Dorsolateral prefrontal cortex (tissue), 120 donors: ENCODE measurements at regions of chr6 and their contacts with region 1.

Region 1: DNA sequence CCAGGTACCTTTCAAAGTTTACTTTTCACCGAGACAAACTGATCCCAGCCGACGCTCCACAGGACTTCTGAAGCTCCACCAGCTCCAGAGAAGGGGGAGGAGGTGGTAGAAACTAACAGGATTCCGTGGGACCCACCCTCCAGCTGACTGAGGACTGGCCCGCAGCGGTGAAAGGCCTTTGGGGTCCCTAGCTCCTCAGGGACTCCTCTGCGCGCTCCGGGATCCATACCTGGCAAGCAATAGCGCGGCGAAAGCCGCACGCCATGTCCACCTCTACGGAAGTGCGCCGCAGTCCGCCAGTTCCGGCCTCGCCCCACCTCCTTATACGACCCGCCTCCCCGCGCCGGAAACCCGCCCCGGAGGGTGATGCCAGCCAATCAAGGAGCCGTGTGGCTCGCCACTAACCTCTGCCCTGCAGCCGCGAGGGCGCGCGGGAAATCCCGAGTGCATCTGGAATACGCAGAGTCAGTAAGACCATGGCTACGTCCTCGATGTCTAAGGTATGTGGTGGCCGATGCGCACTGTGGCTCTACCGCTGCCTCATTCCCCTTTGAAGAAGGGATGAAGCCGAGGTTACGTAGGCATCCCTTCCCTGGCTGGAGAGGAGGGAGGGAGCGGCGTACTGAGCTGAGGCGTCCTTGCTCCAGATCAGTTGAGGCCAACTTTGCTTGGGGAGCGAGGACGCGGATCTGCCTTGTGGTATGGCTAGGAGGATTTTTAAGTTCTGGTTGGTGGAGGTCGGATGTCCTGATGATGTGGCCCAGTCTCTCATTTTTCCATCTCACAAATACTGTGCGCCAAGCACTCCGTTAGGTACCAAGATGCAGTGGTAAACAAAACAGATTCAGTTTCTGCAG is at the starts of genes ORC3 and RARS2:
- DNase-seq: peak; percentile 96 to 98 (median 97)
- H3K4me3 ChIP-seq: peak within 1 kb of the TSS; percentile 59 to 99 (median 91)
- H3K27ac ChIP-seq: peak within 1 kb of the TSS in 37 of 59 donors; percentile 2 to 89 (median 55)
- H3K27me3 ChIP-seq: no peaks in the 10 kb centered on the region
- CTCF ChIP-seq: peak in 40 of 56 donors; percentile 6 to 61 (median 32)
- total RNA-seq, gene ORC3: 21.8 to 47.2 (median 37.7) TPM
- total RNA-seq, gene RARS2: 14.0 to 30.7 (median 21.6) TPM

Region 2: DNA sequence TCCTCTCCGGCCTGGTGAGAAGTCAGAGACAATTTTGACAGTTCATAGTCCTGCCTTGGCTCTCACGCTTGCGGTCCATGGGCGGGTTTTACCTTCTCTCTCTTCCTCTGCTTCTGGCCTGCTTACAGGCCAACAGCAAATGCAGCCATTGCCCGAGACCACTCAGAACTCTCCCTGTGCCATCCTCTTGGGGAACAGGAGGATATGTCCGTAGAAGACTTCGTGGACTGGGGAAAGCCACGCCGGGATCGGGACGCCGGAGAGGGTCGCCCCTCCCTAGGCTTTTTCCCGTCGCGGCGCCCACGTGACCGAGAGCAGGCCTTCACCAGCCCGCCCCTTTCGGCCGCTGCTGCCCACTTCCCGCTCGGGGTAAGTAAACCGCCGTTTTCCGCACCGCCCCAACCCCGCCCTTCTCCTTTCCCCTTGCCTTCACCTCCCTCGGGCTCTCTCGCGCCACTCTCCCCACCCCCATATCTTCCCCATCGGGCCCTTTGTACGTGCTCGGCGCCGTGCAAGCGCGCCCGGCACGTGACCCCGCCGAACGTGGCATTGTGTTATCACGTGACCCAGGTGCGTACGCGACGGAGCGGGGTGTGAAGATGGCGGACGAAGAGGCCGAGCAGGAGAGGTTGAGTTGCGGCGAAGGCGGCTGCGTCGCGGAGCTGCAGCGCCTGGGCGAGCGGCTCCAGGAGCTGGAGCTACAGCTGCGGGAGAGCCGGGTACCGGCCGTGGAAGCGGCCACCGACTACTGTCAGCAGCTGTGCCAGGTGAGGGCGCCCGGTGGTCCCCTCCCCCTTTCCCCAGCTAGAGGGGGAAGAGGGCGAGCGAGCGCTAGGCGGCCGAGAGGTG is 434.7 kb before region 1 on chr6 and contains the start of gene ZNF292:
- intact Hi-C with region 1: loop called in 1 of 2 experiments (anchors 5 kb)
- DNase-seq: peak; percentile 91 to 95 (median 94)
- H3K4me3 ChIP-seq: peak within 1 kb of the TSS; percentile 75 to 100 (median 96)
- H3K27ac ChIP-seq: peak within 1 kb of the TSS; percentile 84 to 100 (median 98)
- H3K27me3 ChIP-seq: no peaks in the 10 kb centered on the region
- CTCF ChIP-seq: peak in 28 of 56 donors; percentile 6 to 53 (median 31)
- total RNA-seq, gene ZNF292: 60.4 to 119 (median 85.4) TPM

Region 3: GRCh38 chr6:87407901-87408720 is 181.8 kb before region 1 on chr6 and contains the start of gene CFAP206:
- intact Hi-C with region 1: loop called in 1 of 2 experiments (anchors 10 kb)
- DNase-seq: peak; percentile 51 to 84 (median 74)
- H3K4me3 ChIP-seq: peak within 1 kb of the TSS; percentile 64 to 98 (median 92)
- H3K27ac ChIP-seq: peak within 1 kb of the TSS; percentile 24 to 95 (median 85)
- H3K27me3 ChIP-seq: no peaks in the 10 kb centered on the region
- CTCF ChIP-seq: peak in 23 of 56 donors; percentile 6 to 45 (median 26)
- total RNA-seq, gene CFAP206: 0.82 to 5.3 (median 3.2) TPM

Region 4: GRCh38 chr6:87472525-87473418 is 117.1 kb before region 1 on chr6 and contains the start of gene SLC35A1:
- intact Hi-C with region 1: loop called (anchors 5 to 10 kb)
- DNase-seq: peak; percentile 76 to 93 (median 86)
- H3K4me3 ChIP-seq: peak within 1 kb of the TSS; percentile 58 to 99 (median 89)
- H3K27ac ChIP-seq: peak within 1 kb of the TSS; percentile 65 to 99 (median 93)
- H3K27me3 ChIP-seq: no peaks in the 10 kb centered on the region
- CTCF ChIP-seq: peak in 49 of 56 donors; percentile 6 to 69 (median 44)
- total RNA-seq, gene SLC35A1: 9.8 to 34.1 (median 22.8) TPM

Region 5: GRCh38 chr6:87701676-87702588 is 112.0 kb after region 1 on chr6 and contains the start of gene AKIRIN2:
- intact Hi-C with region 1: loop called (anchors 5 to 10 kb)
- DNase-seq: peak; percentile 93 to 97 (median 96)
- H3K4me3 ChIP-seq: peak within 1 kb of the TSS; percentile 61 to 98 (median 93)
- H3K27ac ChIP-seq: peak within 1 kb of the TSS; percentile 79 to 100 (median 98)
- H3K27me3 ChIP-seq: no peaks in the 10 kb centered on the region
- CTCF ChIP-seq: peak in 9 of 56 donors; percentile 3 to 41 (median 13)
- total RNA-seq, gene AKIRIN2: 38.8 to 78.6 (median 58.0) TPM

Region 6: DNA sequence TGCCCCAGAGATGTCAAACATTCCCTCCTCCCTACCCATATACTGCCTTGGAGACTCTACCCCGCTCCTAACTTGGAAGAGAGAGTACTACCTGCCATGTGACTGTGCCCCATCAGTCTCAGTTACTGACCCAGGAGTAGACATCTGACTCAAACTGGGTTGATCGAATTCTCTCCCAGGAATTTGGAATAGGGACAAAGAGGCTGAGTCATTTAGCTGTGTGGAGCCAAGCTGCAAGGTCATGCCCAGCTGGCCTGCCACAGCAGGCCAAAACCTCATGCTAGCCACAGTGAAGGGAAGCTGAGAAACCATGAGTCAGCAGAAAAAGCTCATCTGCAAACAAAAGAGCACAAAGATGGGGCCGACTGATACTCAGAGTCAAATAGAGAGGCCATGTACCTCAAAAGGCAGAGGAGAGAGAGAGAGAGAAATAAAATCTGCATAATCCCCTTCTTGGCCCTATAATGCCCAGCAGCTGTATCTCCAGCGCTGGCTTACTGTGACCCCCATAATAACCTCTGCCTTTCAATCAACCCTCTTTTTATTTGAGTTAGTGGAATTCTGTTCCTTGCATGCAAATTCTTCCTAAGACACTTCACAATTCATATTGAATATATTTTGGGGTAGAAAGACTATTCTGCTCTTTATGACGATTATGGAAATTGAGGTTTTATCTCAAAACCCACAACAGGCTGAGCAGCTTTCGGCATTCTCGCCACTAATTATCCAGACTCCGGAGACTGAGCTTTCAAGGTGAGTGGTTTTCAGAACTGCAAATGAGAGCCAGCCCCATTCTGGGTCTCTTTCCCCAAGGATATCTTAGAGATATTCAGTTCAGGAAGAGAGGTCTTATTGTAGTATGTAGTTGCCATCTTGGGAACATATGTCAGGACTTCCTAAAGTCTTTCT is 133.5 kb after region 1 on chr6:
- intact Hi-C with region 1: loop called in 1 of 2 experiments (anchors 5 kb)
- DNase-seq: peak; percentile 22 to 86 (median 78)
- H3K4me3 ChIP-seq: peak overlapping the region in 4 of 59 donors; percentile 12 to 23 (median 20)
- H3K27ac ChIP-seq: peak overlapping the region in 30 of 59 donors; percentile 0 to 77 (median 38)
- H3K27me3 ChIP-seq: no peaks in the 10 kb centered on the region
- CTCF ChIP-seq: peak in 9 of 56 donors; percentile 7 to 24 (median 19)

Region 7: GRCh38 chr6:87772597-87773530 is 182.9 kb after region 1 on chr6:
- intact Hi-C with region 1: no loop called
- DNase-seq: no peak
- H3K4me3 ChIP-seq: no peak overlapping the region
- H3K27ac ChIP-seq: no peak overlapping the region
- H3K27me3 ChIP-seq: no peaks in the 10 kb centered on the region
- CTCF ChIP-seq: no peak